ENCODE measurements at regions of chr10 and their contacts with region 1.

Region 1: GRCh38 chr10:117496616-117497028 is 45.9 kb upstream of the EMX2 start:
- DNase-seq: peak; percentile 62 to 86 (median 67)
- ATAC-seq: peak; percentile 73 to 94 (median 86)
- H3K4me3 ChIP-seq: no peak overlapping the region
- H3K27ac ChIP-seq: no peak overlapping the region
- H3K4me1 ChIP-seq: peaks cover 0 to 3% (median 0%) of the 10 kb centered on the region in 12 donors
- H3K27me3 ChIP-seq: peaks cover 0 to 39% (median 6%) of the 10 kb centered on the region in 9 donors
- CTCF ChIP-seq: peak; percentile 92 to 97 (median 95)
- POLR2A ChIP-seq: no peak

Region 2: DNA sequence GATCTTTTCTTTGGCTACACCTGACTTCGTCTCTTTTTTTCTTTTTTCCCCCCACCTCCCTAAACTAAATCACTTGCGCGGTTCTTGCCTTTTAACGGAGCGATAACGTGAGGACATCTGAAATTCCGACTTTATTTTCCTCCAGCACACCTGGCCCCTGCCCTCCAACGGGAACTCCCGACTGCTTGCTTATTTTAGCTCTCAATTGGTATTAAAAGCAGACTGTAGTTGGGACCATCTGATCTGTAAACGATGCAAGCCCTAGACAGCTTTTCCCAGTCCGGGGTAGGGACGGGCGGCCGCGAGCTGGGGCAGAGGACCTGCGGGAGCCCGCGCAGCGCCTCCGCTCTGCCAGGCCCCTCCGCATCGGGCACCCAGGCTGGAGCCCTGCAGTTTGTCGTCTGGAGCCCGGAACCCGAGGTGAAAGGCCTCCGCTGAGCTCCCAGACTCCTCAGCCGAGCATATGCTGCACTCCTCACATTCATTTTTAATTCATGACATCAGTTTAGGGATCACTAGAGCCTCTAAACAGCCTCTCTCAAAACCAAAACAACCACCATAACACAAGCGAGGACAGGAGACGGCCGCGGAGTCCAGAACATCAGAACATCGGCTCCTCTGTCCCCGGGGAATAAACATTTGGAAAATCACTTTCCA is 36.0 kb after region 1 on chr10:
- intact Hi-C with region 1: no loop called
- DNase-seq: no peak
- ATAC-seq: no peak
- H3K4me3 ChIP-seq: no peak overlapping the region
- H3K27ac ChIP-seq: no peak overlapping the region
- H3K4me1 ChIP-seq: peaks cover 0 to 33% (median 14%) of the 10 kb centered on the region in 12 donors
- H3K27me3 ChIP-seq: peaks cover 52 to 98% (median 80%) of the 10 kb centered on the region in 9 donors
- CTCF ChIP-seq: no peak
- POLR2A ChIP-seq: no peak

Region 3: GRCh38 chr10:117720931-117721835 is 224.6 kb after region 1 on chr10:
- intact Hi-C with region 1: no loop called
- DNase-seq: no peak
- ATAC-seq: no peak
- H3K4me3 ChIP-seq: no peak overlapping the region
- H3K27ac ChIP-seq: no peak overlapping the region
- H3K4me1 ChIP-seq: no peaks in the 10 kb centered on the region
- H3K27me3 ChIP-seq: peaks cover 0 to 10% (median 0%) of the 10 kb centered on the region in 9 donors
- CTCF ChIP-seq: no peak
- POLR2A ChIP-seq: no peak

Region 4: GRCh38 chr10:118106426-118106825 is 609.8 kb after region 1 on chr10:
- intact Hi-C with region 1: loop called in 1 of 10 experiments (anchors 2 kb)
- DNase-seq: peak in 1 of 5 donors; percentile 8
- ATAC-seq: no peak
- H3K4me3 ChIP-seq: no peak overlapping the region
- H3K27ac ChIP-seq: no peak overlapping the region
- H3K4me1 ChIP-seq: no peaks in the 10 kb centered on the region
- H3K27me3 ChIP-seq: peaks cover 0 to 5% (median 0%) of the 10 kb centered on the region in 9 donors
- CTCF ChIP-seq: peak in 10 of 12 donors; percentile 16 to 52 (median 35)
- POLR2A ChIP-seq: no peak

Region 5: DNA sequence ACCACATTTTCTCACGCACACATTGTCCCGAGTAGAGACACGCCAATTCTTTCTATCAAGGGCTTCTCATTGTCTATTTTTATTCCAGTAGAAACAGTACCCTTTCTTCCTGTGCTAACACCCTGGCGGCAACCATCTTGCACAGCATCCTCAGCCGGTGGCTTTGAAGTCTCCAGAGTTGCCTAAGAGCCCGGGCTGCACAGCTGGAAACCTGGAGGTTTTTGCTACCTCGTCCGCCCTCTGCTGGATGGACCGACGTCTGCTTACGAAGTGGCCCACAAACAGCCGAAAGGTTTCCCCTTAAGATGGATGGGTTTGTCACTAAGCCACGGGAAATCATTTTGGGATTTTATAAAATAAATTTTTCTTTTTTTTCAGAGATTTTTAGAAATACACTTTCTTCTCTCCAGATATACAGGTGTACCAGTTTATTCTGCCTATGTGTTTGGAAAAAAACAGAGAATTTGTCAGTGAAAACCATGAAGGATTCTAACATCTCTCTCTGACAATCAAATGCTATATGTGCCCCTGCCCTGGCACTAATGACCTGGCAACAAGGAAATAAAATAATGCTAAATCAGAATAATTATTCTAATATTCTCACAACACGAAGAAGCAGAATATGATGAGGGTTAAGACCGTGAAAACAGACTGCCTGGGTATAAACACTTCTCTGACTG is 927.3 kb after region 1 on chr10:
- intact Hi-C with region 1: loop called in 8 of 10 experiments (anchors 2 to 10 kb)
- DNase-seq: peak; percentile 49 to 83 (median 77)
- ATAC-seq: peak in 3 of 4 donors; percentile 84 to 90 (median 87)
- H3K4me3 ChIP-seq: no peak overlapping the region
- H3K27ac ChIP-seq: no peak overlapping the region
- H3K4me1 ChIP-seq: no peaks in the 10 kb centered on the region
- H3K27me3 ChIP-seq: peaks cover 0 to 14% (median 0%) of the 10 kb centered on the region in 9 donors
- CTCF ChIP-seq: peak; percentile 51 to 82 (median 62)
- POLR2A ChIP-seq: no peak

Region 6: GRCh38 chr10:118459726-118460193 is 963.1 kb after region 1 on chr10:
- intact Hi-C with region 1: loop called in 9 of 10 experiments (anchors 1 to 10 kb)
- DNase-seq: peak in 4 of 5 donors; percentile 28 to 35 (median 31)
- ATAC-seq: peak in 3 of 4 donors; percentile 58 to 83 (median 82)
- H3K4me3 ChIP-seq: no peak overlapping the region
- H3K27ac ChIP-seq: no peak overlapping the region
- H3K4me1 ChIP-seq: no peaks in the 10 kb centered on the region
- H3K27me3 ChIP-seq: peaks cover 0 to 47% (median 9%) of the 10 kb centered on the region in 9 donors
- CTCF ChIP-seq: peak; percentile 56 to 86 (median 72)
- POLR2A ChIP-seq: no peak

Region 7: DNA sequence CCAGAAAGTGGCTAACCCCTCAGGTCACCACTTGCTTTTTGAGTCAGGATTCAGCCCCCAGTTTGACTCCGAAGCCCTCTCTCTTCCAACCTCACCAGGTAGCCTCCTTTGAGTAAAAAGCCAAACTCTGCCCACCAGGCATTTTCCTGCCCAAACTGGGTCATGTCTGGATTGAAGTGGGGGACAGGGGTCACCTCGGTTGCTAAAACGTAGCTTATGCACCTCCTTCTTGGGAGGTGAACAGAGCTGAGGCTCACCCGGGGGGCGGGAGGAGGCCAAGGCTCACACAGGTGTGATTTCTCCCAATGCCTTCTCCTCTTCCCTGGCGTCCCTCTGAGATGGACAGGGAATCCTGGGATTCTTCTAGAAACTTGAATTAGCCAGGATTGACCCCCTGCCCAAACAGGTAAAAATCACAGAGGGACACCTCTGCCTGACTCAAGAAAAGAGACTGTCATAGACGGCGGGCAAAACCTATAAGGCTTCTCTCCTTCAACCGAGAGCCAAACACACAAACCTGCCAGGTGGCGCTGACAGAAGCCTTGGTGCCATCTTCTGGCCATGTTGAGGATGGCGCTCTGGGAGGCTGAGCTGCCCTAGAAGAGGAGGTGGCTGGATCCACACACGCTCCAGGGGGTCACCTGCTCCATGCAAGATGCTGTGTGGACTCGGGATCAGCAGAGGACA is 1047.2 kb after region 1 on chr10:
- intact Hi-C with region 1: loop called in 1 of 10 experiments (anchors 10 kb)
- DNase-seq: peak in 1 of 5 donors; percentile 38
- ATAC-seq: peak in 3 of 4 donors; percentile 47 to 80 (median 66)
- H3K4me3 ChIP-seq: no peak overlapping the region
- H3K27ac ChIP-seq: no peak overlapping the region
- H3K4me1 ChIP-seq: no peaks in the 10 kb centered on the region
- H3K27me3 ChIP-seq: peaks cover 0 to 30% (median 6%) of the 10 kb centered on the region in 9 donors
- CTCF ChIP-seq: peak; percentile 15 to 58 (median 36)
- POLR2A ChIP-seq: no peak

Measured in heart left ventricle (tissue), 16 donors.